CD8-positive, alpha-beta T cell (primary cell): ENCODE measurements at regions of chr10 and their contacts with region 1.

Region 1: GRCh38 chr10:98745645-98746044 is 298.9 kb upstream of the HPS1 start:
- DNase-seq: no peak
- ATAC-seq: no peak
- H3K4me3 ChIP-seq: no peak overlapping the region
- H3K4me3 Mint-ChIP-seq: no peak overlapping the region
- H3K27ac ChIP-seq: no peak overlapping the region
- H3K27ac Mint-ChIP-seq: no peak overlapping the region
- H3K4me1 ChIP-seq: no peaks in the 10 kb centered on the region
- H3K4me1 Mint-ChIP-seq: no peaks in the 10 kb centered on the region
- H3K27me3 ChIP-seq: no peaks in the 10 kb centered on the region
- H3K27me3 Mint-ChIP-seq: no peaks in the 10 kb centered on the region
- CTCF ChIP-seq: no peak

Region 2: DNA sequence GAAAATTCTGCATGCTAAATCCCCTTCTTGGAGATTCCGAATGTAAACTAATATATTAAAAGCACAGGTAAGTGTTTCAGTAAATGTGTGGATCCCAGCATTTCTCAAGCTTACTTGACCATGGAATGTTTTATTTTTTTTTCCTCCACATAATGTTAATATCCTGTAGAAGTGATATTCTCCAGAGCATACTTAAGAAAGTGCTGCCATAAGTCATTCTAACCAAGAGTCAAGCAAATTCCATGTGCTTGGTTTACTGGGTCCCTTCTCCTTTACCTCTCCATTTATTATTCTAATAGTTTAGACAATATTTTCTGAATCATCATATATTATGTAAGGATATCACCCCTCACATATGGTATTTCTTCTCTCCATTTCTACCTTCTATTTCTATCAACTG is 32.1 kb before region 1 on chr10:
- CTCF ChIA-PET with region 1: no interaction called
- POLR2A ChIA-PET with region 1: no interaction called
- intact Hi-C with region 1: loop called in 1 of 2 experiments (anchors 2 kb)
- DNase-seq: no peak
- ATAC-seq: no peak
- H3K4me3 ChIP-seq: no peak overlapping the region
- H3K4me3 Mint-ChIP-seq: no peak overlapping the region
- H3K27ac ChIP-seq: no peak overlapping the region
- H3K27ac Mint-ChIP-seq: no peak overlapping the region
- H3K4me1 ChIP-seq: no peaks in the 10 kb centered on the region
- H3K4me1 Mint-ChIP-seq: no peaks in the 10 kb centered on the region
- H3K27me3 ChIP-seq: no peaks in the 10 kb centered on the region
- H3K27me3 Mint-ChIP-seq: peaks cover 6% of the 10 kb centered on the region
- CTCF ChIP-seq: no peak